ENCODE measurements at regions of chr20 and their contacts with region 1.

Region 1: DNA sequence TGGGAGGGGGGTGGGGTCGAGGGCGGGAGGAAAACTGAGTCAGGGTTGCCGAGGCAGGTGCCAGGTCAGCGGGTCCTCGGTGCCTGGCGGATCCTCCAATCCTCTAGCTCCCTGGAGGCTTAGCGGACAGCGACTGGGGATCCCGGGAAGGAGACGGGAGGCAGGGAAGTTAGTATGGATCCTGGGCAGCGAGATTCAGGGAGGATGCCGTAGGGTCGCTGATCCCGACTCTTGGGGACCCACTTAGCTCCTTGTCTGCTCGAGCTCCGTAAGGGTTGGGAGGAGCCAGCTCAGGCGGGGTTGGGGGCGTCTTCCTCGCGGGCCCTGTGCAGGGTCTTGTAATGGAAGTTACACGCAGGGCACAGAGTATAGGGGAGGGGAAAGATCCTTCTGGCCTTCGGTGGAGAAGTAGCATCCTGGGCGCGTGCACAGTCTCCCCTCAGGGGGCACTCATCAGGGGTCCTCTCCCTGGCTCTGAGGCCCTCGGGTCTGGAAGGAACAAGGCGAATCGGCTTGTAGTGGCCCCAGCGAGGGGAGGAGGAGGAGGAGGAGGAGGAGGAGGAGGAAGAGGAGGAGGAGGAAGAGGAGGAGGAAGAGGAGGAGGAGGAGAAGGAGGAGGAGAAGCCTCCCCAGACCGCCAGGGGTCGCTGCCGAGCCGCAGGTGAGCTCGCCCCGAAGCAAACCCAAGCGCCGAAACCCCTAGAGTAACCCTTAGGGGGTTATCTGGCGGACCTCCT is 6.4 kb upstream of the SLC12A5 start:
- DNase-seq: no peak
- ATAC-seq: peak; percentile 73
- H3K4me3 ChIP-seq: peak overlapping the region; percentile 45 to 55
- H3K27ac ChIP-seq: no peak overlapping the region
- H3K4me1 ChIP-seq: peaks cover 0 to 16% of the 10 kb centered on the region in 2 experiments; a peak in 2 of 4 replicates
- H3K27me3 ChIP-seq: peaks cover 27% of the 10 kb centered on the region; the same call in 1 of the 2 replicates
- CTCF ChIP-seq: peak; percentile 39 to 83 (median 65); a peak in 4 of 6 replicates
- POLR2A ChIP-seq: no peak
- RAD21 ChIP-seq: peak; percentile 66

Region 2: DNA sequence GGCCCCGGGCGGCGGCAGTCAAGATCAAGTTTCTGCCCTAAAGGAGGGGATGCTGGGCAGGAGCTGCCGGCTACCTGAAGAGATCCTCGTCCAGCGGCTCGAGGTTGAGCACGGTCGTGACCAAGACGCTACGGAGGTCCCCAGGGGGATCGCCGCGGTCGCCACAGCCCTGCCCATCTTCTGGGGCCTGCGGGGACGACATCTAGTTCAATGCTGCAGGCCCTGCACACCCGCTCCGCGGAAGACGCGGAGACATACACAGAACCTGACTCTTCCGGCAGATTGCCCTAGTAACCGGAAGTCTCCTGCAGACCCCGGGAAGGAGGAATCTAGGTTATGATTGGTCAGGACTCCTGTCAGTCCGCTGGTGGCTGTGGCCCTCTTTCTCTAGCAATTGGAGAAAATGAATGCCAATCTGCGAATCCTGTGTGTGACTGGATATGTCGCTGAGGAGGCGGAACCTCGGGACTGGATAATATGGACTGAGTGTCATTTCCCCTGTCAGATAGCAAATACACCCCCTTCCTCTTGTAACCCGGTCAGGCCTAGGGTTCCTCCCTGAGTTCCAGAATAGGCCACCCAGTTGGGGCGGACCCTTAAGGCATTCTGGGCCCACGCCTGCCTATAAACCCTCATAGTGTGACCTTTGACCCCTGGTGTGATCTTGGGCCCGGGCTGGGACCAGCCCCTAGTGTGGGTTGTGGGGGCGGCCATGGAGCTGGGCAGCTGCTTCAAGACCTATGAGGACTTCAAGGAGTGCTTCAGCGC is 165.3 kb before region 1 on chr20 and contains the starts of genes ACOT8 and ZSWIM3:
- CTCF ChIA-PET with region 1: no interaction called
- POLR2A ChIA-PET with region 1: no interaction called
- RAD21 ChIA-PET with region 1: no interaction called
- intact Hi-C with region 1: no loop called
- DNase-seq: peak; percentile 100
- ATAC-seq: peak; percentile 98
- H3K4me3 ChIP-seq: peak within 1 kb of the TSS; percentile 72 to 96
- H3K27ac ChIP-seq: peak within 1 kb of the TSS; percentile 55
- H3K4me1 ChIP-seq: peaks cover 15 to 36% of the 10 kb centered on the region in 2 experiments
- H3K27me3 ChIP-seq: no peaks in the 10 kb centered on the region
- CTCF ChIP-seq: no peak
- POLR2A ChIP-seq: peak; percentile 75
- RAD21 ChIP-seq: no peak
- total RNA-seq, gene ACOT8: 12.2 TPM
- total RNA-seq, gene ZSWIM3: 1.8 TPM

Region 3: DNA sequence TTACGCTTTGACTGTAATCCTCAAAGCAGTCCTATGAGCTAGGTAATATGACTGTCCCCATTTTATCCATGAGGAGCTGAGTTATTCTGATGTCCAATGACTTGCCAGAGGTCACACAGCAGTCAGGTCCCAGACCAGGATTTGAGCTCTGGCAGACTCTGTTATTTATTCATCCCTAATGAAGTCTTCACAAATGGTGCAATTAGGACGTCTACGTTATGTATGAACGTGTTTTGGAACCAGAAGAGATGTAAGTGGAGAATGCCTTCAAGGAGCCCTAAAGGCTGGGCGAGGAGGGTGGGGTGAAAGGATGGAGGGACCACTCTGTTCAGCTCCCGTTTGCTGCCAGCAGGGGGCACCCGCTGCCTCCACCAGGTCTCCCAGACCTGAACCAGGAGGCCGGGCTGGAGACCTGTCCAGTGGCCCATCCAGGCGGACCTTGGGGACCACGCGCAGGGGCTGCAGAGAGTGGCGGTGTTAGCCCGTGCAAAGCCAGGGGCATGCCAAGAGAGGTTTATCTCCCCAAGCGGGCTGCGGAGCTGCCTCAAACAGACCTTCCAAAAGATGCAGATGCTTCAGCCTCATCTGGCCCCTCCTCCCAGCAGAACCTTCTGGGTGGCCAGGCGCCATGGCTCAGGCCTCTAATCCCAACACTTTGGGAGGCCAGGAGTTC is 35.3 kb before region 1 on chr20:
- CTCF ChIA-PET with region 1: interaction called, 10 read pairs
- POLR2A ChIA-PET with region 1: no interaction called
- RAD21 ChIA-PET with region 1: no interaction called
- intact Hi-C with region 1: no loop called
- DNase-seq: peak; percentile 61
- ATAC-seq: peak; percentile 99
- H3K4me3 ChIP-seq: no peak overlapping the region
- H3K27ac ChIP-seq: no peak overlapping the region
- H3K4me1 ChIP-seq: peaks cover 0 to 6% of the 10 kb centered on the region in 2 experiments; a peak in 1 of 4 replicates
- H3K27me3 ChIP-seq: no peaks in the 10 kb centered on the region
- CTCF ChIP-seq: peak; percentile 85 to 96 (median 94)
- POLR2A ChIP-seq: no peak
- RAD21 ChIP-seq: peak; percentile 84

Region 4: GRCh38 chr20:46004889-46005473 is 17.6 kb before region 1 on chr20:
- CTCF ChIA-PET with region 1: no interaction called
- POLR2A ChIA-PET with region 1: no interaction called
- RAD21 ChIA-PET with region 1: no interaction called
- intact Hi-C with region 1: no loop called
- DNase-seq: no peak
- ATAC-seq: no peak
- H3K4me3 ChIP-seq: no peak overlapping the region
- H3K27ac ChIP-seq: no peak overlapping the region
- H3K4me1 ChIP-seq: peaks cover 3 to 6% of the 10 kb centered on the region in 2 experiments; a peak in 3 of 4 replicates
- H3K27me3 ChIP-seq: peaks cover 5% of the 10 kb centered on the region; the same call in 1 of the 2 replicates
- CTCF ChIP-seq: no peak
- POLR2A ChIP-seq: no peak
- RAD21 ChIP-seq: no peak

Region 5: DNA sequence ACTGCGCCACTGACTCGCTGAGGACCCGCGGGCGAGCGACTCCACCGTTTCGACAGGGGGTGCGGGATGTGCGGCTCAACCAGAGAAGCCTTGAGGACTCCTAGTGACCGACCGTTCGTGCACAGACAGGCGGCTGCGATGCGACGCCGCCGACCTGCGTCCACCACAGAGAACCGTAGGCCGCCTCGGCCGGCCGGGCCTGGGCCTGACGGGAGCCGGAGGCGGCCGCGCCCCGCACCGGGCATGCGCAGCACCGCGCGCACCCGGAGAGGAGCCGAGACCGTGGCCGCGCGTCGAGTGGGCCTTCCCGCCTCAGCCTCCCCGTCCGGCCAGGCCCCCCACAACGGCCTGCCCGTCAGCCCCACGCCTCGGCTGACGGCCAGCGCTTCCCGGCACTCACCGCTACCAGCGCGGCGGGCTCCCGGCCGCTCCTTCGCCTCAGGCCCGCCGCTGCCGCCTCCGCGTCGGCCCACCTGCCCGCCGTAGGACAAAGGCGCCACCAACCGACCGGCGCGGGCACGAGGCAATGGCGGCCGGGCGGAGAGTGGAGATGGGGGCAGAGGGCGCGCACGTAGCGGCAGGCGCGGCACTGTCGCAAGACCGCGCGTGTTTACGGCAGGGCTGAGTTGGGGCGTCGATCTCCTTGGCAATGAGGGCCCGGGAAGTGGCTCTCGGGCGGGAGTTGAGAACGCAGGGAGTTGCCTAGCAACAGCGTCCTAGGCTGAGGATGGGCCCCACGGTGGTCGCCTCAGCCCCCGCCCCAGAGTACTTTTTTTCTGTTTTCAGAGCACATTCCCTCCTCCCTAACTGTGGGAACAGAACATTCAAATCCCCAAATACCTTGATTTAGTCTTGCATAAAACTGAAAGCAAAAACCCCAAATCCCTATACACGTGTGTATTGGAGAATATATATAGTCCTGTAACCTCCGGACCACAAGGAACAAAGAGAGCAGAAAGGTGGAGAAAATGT is 67.1 kb after region 1 on chr20 and contains the start of gene NCOA5:
- CTCF ChIA-PET with region 1: interaction called, 6 read pairs
- POLR2A ChIA-PET with region 1: no interaction called
- RAD21 ChIA-PET with region 1: no interaction called
- intact Hi-C with region 1: loop called (anchors 1 kb)
- DNase-seq: peak; percentile 88
- ATAC-seq: peak; percentile 89
- H3K4me3 ChIP-seq: peak within 1 kb of the TSS; percentile 84 to 93
- H3K27ac ChIP-seq: peak within 1 kb of the TSS; percentile 95
- H3K4me1 ChIP-seq: peaks cover 24 to 47% of the 10 kb centered on the region in 2 experiments
- H3K27me3 ChIP-seq: no peaks in the 10 kb centered on the region
- CTCF ChIP-seq: no peak
- POLR2A ChIP-seq: peak; percentile 89
- RAD21 ChIP-seq: peak; percentile 32; the same call in 1 of the 2 replicates
- total RNA-seq, gene NCOA5: 31.6 TPM

Region 6: DNA sequence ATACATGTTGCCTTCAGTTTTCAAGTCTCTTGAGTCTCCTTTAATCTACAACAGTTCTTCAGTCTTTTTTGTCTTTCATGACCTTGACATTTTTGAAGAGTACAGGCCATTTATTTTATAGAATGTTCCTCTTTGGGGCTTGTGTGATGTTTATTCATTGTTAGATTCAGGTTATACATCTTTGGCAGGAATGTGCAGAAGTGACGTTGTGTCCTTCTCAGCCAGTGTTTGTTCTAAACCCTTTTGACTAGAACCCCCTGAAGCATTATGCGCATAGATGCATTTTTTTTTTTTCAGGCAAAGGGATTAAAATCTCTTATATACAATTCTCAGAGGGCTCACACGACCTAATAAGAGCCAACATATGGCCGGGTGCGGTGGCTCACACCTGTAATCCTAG is 78.4 kb after region 1 on chr20:
- CTCF ChIA-PET with region 1: no interaction called
- POLR2A ChIA-PET with region 1: no interaction called
- RAD21 ChIA-PET with region 1: no interaction called
- intact Hi-C with region 1: no loop called
- DNase-seq: no peak
- ATAC-seq: no peak
- H3K4me3 ChIP-seq: no peak overlapping the region
- H3K27ac ChIP-seq: no peak overlapping the region
- H3K4me1 ChIP-seq: no peaks in the 10 kb centered on the region
- H3K27me3 ChIP-seq: no peaks in the 10 kb centered on the region
- CTCF ChIP-seq: no peak
- POLR2A ChIP-seq: no peak
- RAD21 ChIP-seq: no peak

Region 7: GRCh38 chr20:46174469-46175128 is 152.0 kb after region 1 on chr20:
- CTCF ChIA-PET with region 1: no interaction called
- POLR2A ChIA-PET with region 1: no interaction called
- RAD21 ChIA-PET with region 1: no interaction called
- intact Hi-C with region 1: loop called (anchors 2 kb)
- DNase-seq: peak; percentile 13
- ATAC-seq: peak; percentile 96
- H3K4me3 ChIP-seq: peak overlapping the region in 1 of 2 experiments; percentile 8; a peak in 1 of 4 replicates
- H3K27ac ChIP-seq: no peak overlapping the region; the same call in 1 of the 2 replicates
- H3K4me1 ChIP-seq: peaks cover 0 to 9% of the 10 kb centered on the region in 2 experiments; a peak in 2 of 4 replicates
- H3K27me3 ChIP-seq: peaks cover 23% of the 10 kb centered on the region; the same call in 1 of the 2 replicates
- CTCF ChIP-seq: peak in 2 of 3 experiments; percentile 25 to 50; a peak in 3 of 6 replicates
- POLR2A ChIP-seq: no peak
- RAD21 ChIP-seq: peak; percentile 37; the same call in 1 of the 2 replicates

Region 8: DNA sequence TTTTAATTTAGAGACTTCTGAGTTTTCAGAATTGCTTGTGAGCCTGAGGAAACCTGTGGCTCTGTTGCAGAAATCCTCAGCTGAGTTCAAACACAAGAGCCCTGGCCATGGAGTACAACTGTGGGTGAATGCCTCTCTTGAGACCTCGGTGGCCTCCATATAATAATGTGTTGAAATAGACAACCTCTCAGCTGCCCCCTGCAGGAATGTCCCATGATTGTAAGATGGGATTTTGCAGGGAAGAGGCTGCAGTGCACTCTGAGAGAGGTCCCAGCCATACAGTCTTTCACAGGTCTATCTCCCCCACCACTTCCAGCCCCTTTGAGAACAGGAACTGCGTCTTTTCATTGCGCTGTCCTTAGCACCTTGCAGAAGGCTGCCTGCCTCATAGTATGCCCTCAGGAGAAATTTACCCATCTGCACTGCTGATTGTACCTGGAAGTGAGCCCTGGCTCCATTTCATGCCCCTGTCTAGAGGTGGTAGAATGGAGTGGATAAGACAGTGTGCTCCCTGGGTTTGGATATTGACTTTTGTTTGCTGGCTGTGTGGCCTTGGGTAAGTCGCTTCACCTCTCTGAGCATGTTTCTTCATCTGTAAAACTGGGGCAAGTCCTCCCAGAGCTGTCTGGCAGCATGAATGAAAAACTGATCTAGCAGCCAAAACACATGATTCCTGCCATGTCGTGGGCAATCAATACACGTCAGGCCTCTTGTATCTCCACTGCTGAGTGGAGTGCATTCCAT is 302.6 kb after region 1 on chr20:
- CTCF ChIA-PET with region 1: interaction called, 3 read pairs
- POLR2A ChIA-PET with region 1: no interaction called
- RAD21 ChIA-PET with region 1: no interaction called
- intact Hi-C with region 1: loop called (anchors 10 kb)
- DNase-seq: no peak
- ATAC-seq: peak; percentile 97
- H3K4me3 ChIP-seq: no peak overlapping the region
- H3K27ac ChIP-seq: no peak overlapping the region
- H3K4me1 ChIP-seq: no peaks in the 10 kb centered on the region
- H3K27me3 ChIP-seq: no peaks in the 10 kb centered on the region; the same call in 1 of the 2 replicates
- CTCF ChIP-seq: peak; percentile 43 to 58 (median 56); a peak in 5 of 6 replicates
- POLR2A ChIP-seq: no peak
- RAD21 ChIP-seq: peak; percentile 56